Activated naive CD4-positive, alpha-beta T cell treated with anti-CD3 and anti-CD28 coated beads for 36 hours (primary cell): ENCODE measurements at regions of chr13 and their contacts with region 1.

Region 1: DNA sequence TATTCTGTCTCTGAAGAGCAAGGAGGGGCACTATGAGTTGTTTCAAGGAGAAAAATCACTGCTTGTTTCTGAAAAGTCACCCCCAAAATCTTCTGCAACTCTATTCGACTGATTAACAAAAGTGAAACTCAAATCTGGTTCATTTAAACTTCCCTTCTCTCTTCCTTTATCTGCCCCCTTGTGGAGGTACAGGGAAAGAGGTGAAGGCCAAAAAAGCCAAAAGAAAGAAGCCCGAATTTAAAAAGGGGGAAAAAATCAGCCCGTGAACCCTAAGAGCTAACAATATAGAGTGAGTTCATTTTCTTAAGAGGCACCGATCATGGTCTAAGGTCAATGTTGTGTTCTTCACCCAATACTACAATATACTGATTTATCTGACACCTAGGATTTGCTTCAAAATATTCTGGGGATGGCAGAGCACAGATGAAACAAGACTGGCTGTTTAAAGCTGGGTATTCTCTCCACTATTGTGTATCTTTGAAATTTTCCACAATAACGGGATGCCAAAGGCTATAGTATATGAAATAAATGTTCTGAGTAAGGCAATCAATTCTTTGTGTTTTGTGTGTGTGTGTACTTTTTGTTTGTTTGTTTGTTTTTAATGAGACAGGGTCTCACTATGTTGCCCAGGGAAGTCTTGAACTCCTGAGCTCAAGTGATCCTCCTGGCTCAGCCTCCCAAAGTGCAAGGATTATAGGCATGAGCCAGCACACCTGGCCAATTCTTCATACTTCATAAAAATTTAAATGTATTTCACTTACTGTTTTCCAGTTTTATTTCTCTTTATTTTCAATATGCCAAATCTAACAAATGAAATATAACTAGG is 55.0 kb upstream of the EEF1AKMT1 start:
- DNase-seq: peak; percentile 47
- H3K4me3 Mint-ChIP-seq: no peak overlapping the region
- H3K27ac Mint-ChIP-seq: no peak overlapping the region
- H3K4me1 Mint-ChIP-seq: peaks cover 6% of the 10 kb centered on the region
- H3K27me3 Mint-ChIP-seq: no peaks in the 10 kb centered on the region

Region 2: DNA sequence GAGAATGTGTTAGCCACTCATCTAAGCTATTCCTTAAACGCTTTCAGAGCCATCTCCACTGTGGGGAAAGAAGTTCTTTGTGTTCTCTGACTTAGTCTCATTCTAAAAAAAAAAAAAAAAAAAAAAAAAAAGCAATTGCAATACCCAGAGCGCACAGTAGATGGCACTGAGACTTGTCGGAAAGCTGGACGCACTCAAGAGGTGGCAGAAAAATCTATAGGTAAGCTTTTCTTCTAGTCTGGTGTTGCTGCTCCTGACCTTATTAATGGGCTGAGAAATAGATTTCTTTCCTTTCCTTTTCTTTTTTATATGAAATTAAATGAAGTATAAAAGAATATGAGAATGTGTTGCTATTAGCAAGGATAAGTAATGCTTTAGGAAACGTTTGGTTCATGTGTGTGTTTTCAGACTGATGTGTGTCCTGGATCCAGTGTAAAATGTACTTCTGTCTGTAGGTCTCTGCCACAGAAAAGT is 631.4 kb before region 1 on chr13:
- CTCF ChIA-PET with region 1: interaction called, 6 read pairs
- intact Hi-C with region 1: loop called (anchors 1 kb)
- DNase-seq: peak; percentile 23
- H3K4me3 Mint-ChIP-seq: no peak overlapping the region
- H3K27ac Mint-ChIP-seq: no peak overlapping the region
- H3K4me1 Mint-ChIP-seq: peaks cover 13% of the 10 kb centered on the region
- H3K27me3 Mint-ChIP-seq: peaks cover 37% of the 10 kb centered on the region

Region 3: GRCh38 chr13:20495082-20496023 is 333.4 kb before region 1 on chr13:
- CTCF ChIA-PET with region 1: interaction called, 40 read pairs
- intact Hi-C with region 1: loop called (anchors 1 kb)
- DNase-seq: peak; percentile 81
- H3K4me3 Mint-ChIP-seq: no peak overlapping the region
- H3K27ac Mint-ChIP-seq: no peak overlapping the region
- H3K4me1 Mint-ChIP-seq: no peaks in the 10 kb centered on the region
- H3K27me3 Mint-ChIP-seq: no peaks in the 10 kb centered on the region

Region 4: DNA sequence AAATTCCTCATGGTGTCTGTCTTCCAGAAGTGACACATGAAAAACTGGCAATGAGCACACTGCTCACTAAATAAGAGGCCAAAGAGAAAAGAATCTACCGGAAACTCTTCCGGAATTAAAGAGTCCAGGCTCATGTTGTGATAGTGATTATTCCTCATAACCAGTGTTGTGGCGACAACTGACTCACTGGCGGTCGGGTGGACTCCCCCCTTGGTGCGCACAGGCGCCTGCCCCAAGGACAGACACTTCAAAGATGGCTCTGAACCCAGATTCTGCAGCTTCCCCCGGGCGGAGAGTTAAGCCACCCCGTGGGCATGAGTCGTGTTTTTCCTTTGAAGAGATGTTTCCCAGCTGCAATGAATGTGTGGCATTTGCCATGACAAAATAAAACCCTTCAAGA is 115.0 kb before region 1 on chr13:
- CTCF ChIA-PET with region 1: interaction called, 17 read pairs
- intact Hi-C with region 1: loop called (anchors 1 kb)
- DNase-seq: no peak
- H3K4me3 Mint-ChIP-seq: no peak overlapping the region
- H3K27ac Mint-ChIP-seq: no peak overlapping the region
- H3K4me1 Mint-ChIP-seq: peaks cover 5% of the 10 kb centered on the region
- H3K27me3 Mint-ChIP-seq: peaks cover 8% of the 10 kb centered on the region

Region 5: DNA sequence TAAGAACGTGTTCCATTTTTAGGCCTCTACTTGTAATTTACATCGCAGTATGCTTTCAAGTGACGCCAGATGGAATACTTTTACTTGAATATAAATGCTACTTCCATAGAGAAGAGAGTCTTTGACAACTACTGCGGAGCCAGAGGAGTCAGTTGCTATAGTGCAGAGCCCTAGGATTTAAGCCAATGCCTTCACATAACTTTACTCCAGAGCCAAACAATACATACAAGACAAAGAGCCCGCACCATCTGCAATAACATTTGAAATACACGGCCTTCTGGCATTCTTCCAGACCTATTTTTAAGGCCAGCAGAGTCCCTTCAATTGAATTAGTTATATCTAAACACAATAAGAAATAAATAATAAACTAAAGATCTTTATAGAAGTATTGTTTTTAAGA is 14.4 kb after region 1 on chr13:
- CTCF ChIA-PET with region 1: interaction called, 21 read pairs
- intact Hi-C with region 1: no loop called
- DNase-seq: no peak
- H3K4me3 Mint-ChIP-seq: no peak overlapping the region
- H3K27ac Mint-ChIP-seq: no peak overlapping the region
- H3K4me1 Mint-ChIP-seq: peaks cover 2% of the 10 kb centered on the region
- H3K27me3 Mint-ChIP-seq: no peaks in the 10 kb centered on the region

Region 6: DNA sequence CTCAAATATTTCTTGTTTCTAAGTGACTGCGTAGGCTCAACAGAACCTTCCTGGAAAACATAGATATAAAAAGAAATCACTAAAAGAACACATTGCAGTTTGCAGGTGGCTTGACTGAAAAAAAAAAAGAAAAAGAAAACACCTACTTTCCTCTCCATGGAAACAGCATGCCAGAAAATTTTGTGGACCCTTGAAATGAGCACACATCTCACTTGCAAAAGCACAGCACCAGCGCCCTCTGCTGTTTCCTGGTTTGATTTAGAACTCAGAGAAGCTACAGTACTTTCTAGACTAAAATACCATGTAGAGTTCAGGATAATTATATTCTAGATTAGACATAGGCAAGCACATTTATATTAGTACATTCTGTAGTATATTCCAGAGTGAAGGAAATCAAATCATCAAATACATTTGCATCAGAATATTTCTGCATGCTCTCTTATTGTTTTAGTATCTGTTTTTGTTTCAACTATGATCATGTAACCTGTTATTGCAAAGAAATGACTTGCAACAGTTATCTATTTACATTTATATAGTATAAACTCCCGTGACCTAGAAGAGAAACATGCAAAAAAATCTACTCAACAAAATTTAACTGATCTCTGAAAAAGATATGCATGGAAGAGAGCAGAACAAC is 96.1 kb after region 1 on chr13:
- CTCF ChIA-PET with region 1: interaction called, 7 read pairs
- intact Hi-C with region 1: loop called (anchors 2 kb)
- DNase-seq: peak; percentile 89
- H3K4me3 Mint-ChIP-seq: no peak overlapping the region
- H3K27ac Mint-ChIP-seq: no peak overlapping the region
- H3K4me1 Mint-ChIP-seq: no peaks in the 10 kb centered on the region
- H3K27me3 Mint-ChIP-seq: no peaks in the 10 kb centered on the region